Activated T-helper 1 cell treated with anti-CD3 and anti-CD28 coated beads, Interleukin-12 subunit alpha, Interleukin-12 subunit beta, Interleukin-2, Interleukin-4 antibody, amounts not matched to agents 30 ng/mL and 10 ng/mL and 1 ng/mL, durations not matched to agents 14 hours and 24 hours and 36 hours (primary cell): ENCODE measurements at regions of chr6 and their contacts with region 1.

Region 1: GRCh38 chr6:20542927-20543602 is 8.8 kb downstream of the CDKAL1 start:
- DNase-seq: peak; percentile 35
- H3K4me3 Mint-ChIP-seq: peak overlapping the region; percentile 66
- H3K27ac Mint-ChIP-seq: peak overlapping the region; percentile 91
- H3K4me1 Mint-ChIP-seq: peaks cover 50% of the 10 kb centered on the region
- H3K27me3 Mint-ChIP-seq: no peaks in the 10 kb centered on the region

Region 2: DNA sequence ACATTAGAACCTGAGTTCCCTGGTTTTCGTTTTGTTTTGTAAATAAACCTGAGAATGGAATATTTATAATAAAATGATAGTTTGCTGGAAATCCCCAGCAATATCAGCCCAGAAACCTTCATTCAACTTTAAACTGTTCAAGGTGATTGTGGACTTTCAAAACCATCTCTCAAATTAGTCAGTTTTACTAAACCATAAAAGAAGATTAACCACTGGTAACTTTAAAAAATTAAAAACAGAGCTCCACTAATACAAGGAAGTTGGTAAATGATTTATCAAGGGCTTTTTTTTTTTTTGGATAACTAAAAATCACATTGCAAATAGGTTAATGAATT is 340.8 kb before region 1 on chr6:
- intact Hi-C with region 1: loop called (anchors 1 kb)
- DNase-seq: no peak
- H3K4me3 Mint-ChIP-seq: no peak overlapping the region
- H3K27ac Mint-ChIP-seq: peak overlapping the region; percentile 30
- H3K4me1 Mint-ChIP-seq: peaks cover 77% of the 10 kb centered on the region
- H3K27me3 Mint-ChIP-seq: no peaks in the 10 kb centered on the region

Region 3: DNA sequence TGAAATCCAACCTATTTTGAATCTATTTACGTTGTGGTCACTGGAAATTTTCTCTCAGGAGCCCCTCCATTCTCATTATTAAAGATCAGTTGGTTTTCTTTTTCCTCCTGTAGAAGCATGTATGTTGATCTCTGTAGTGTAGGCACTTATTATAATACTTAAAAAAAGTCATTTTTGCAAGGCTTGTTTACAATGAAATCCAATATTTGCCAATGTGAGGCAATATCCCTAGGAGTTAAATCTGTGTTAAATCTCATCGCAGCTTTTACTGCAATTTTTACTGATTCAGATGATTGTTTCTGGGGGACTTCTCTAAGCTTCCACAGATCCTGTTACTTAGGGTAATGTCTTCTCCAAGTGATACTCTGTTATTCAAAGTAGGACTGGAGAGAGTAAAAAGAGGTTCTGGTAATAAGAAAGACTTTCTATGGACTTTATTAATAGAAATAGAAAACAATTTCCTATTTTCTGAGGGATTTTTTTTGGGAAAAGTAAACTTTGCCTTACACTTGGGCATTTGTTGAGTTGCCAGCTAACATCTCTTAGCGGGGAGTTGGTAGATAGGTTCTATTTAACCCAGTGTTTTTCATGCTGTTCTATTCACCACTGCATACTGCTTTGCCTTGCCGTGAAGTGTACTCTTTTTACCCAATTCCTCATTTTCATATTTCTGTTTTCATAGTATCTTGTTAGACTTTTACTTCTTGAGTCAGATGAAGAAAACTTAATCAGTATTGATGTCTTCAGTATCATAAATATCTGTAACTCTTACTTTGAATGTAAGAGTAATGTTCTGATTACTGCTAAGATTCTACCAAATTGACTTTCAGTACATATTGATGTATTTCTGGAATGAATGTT is 39.8 kb after region 1 on chr6:
- intact Hi-C with region 1: loop called (anchors 1 kb)
- DNase-seq: no peak
- H3K4me3 Mint-ChIP-seq: no peak overlapping the region
- H3K27ac Mint-ChIP-seq: peak overlapping the region; percentile 73
- H3K4me1 Mint-ChIP-seq: peaks cover 19% of the 10 kb centered on the region
- H3K27me3 Mint-ChIP-seq: no peaks in the 10 kb centered on the region

Region 4: GRCh38 chr6:20688710-20689500 is 145.8 kb after region 1 on chr6:
- intact Hi-C with region 1: loop called (anchors 1 kb)
- DNase-seq: no peak
- H3K4me3 Mint-ChIP-seq: peak overlapping the region; percentile 11
- H3K27ac Mint-ChIP-seq: peak overlapping the region; percentile 10
- H3K4me1 Mint-ChIP-seq: peaks cover 18% of the 10 kb centered on the region
- H3K27me3 Mint-ChIP-seq: no peaks in the 10 kb centered on the region

Region 5: GRCh38 chr6:20919677-20920385 is 376.8 kb after region 1 on chr6:
- intact Hi-C with region 1: loop called (anchors 1 kb)
- DNase-seq: no peak
- H3K4me3 Mint-ChIP-seq: no peak overlapping the region
- H3K27ac Mint-ChIP-seq: peak overlapping the region; percentile 82
- H3K4me1 Mint-ChIP-seq: peaks cover 20% of the 10 kb centered on the region
- H3K27me3 Mint-ChIP-seq: no peaks in the 10 kb centered on the region